CD4-positive, alpha-beta T cell (primary cell): ENCODE measurements at regions of chr12 and their contacts with region 1.

Region 1: DNA sequence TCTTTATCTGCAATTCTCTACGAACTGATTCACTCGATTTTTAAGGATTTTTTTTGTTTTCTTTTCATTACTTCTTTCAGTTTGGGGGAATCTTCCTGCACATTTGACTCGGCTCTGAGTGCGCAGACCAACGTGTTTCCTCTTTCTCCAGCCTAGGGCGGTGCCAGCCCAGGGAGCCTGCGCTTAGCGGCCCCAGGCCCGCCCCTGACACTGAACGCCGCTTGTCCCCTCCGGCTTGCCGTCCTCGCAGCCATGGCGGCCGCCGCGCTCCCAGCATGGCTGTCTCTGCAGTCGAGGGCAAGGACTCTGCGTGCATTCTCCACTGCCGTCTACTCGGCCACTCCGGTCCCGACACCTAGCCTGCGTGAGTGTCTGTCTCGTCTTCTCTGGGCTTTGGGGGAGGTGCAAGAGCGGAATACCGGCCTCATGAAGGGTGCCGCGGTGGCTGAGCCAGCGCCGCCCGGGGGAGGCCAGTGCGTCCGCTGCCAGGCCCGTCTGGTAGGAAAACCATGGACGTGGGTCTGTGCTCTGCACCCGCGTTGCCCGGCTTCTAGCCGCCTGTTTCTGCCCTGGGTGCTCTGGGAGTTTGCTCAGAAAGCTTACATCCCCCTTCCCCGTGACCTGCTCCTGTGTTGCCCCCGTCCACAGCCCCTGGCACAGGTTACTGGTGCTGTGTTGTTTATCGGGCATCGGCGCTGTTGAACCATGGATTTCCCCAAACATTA is at the start of gene MRPS35:
- DNase-seq: peak; percentile 83 to 95 (median 88)
- ATAC-seq: peak; percentile 96
- H3K4me3 ChIP-seq: peak within 1 kb of the TSS; percentile 71
- H3K4me3 Mint-ChIP-seq: peak within 1 kb of the TSS; percentile 98
- H3K27ac ChIP-seq: peak within 1 kb of the TSS; percentile 60 to 69
- H3K27ac Mint-ChIP-seq: peak within 1 kb of the TSS; percentile 96
- H3K4me1 ChIP-seq: peaks cover 25% of the 10 kb centered on the region
- H3K4me1 Mint-ChIP-seq: peaks cover 41% of the 10 kb centered on the region
- H3K27me3 ChIP-seq: no peaks in the 10 kb centered on the region
- H3K27me3 Mint-ChIP-seq: no peaks in the 10 kb centered on the region
- CTCF ChIP-seq: no peak
- total RNA-seq, gene MRPS35: 22.1 to 23.9 TPM

Region 2: DNA sequence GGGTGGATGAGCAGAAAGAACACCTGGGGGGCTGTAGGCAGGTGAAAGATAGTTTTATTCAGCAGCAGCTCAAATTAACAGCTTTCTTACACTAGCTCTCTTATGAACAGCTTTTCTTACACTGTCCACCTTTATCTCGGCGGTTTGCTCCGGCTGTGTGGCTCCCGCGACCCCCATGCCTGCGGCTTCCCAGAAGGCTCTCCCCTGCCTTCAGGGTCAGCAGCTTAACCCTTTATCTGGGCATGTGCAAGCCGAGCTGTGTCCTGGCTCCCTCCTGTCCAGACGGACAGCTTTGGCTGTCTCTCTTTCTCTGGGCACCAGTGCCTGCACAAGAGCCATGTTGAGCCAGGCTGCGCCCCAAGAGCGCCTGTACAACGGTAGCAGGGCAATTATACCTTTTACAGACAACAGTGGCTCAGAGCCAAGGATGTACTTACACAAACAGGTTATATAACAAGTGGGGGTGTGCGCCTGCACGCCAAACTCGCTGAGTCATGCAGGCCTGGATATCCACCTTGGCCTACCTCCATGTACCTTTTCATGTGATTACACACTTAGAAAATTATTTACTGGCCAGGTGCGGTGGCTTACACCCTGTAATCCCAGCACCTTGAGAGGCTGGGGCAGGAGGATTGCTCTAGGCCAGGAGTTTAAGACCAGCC is 40.8 kb after region 1 on chr12:
- CTCF ChIA-PET with region 1: no interaction called
- POLR2A ChIA-PET with region 1: no interaction called
- intact Hi-C with region 1: no loop called
- DNase-seq: no peak
- ATAC-seq: no peak
- H3K4me3 ChIP-seq: no peak overlapping the region
- H3K4me3 Mint-ChIP-seq: no peak overlapping the region
- H3K27ac ChIP-seq: no peak overlapping the region
- H3K27ac Mint-ChIP-seq: no peak overlapping the region
- H3K4me1 ChIP-seq: no peaks in the 10 kb centered on the region
- H3K4me1 Mint-ChIP-seq: no peaks in the 10 kb centered on the region
- H3K27me3 ChIP-seq: no peaks in the 10 kb centered on the region
- H3K27me3 Mint-ChIP-seq: no peaks in the 10 kb centered on the region
- CTCF ChIP-seq: no peak

Region 3: GRCh38 chr12:27779920-27780611 is 69.3 kb after region 1 on chr12 and contains the starts of genes KLHL42 and MANSC4:
- CTCF ChIA-PET with region 1: no interaction called
- POLR2A ChIA-PET with region 1: interaction called, 17 read pairs
- intact Hi-C with region 1: loop called in 1 of 2 experiments (anchors 5 kb)
- DNase-seq: peak; percentile 47 to 84 (median 65)
- ATAC-seq: peak; percentile 81
- H3K4me3 ChIP-seq: peak within 1 kb of the TSS; percentile 80
- H3K4me3 Mint-ChIP-seq: peak within 1 kb of the TSS; percentile 90
- H3K27ac ChIP-seq: peak within 1 kb of the TSS in 1 of 2 donors; percentile 22
- H3K27ac Mint-ChIP-seq: peak within 1 kb of the TSS; percentile 80
- H3K4me1 ChIP-seq: peaks cover 27% of the 10 kb centered on the region
- H3K4me1 Mint-ChIP-seq: peaks cover 40% of the 10 kb centered on the region
- H3K27me3 ChIP-seq: no peaks in the 10 kb centered on the region
- H3K27me3 Mint-ChIP-seq: no peaks in the 10 kb centered on the region
- CTCF ChIP-seq: no peak
- total RNA-seq, gene KLHL42: 12.8 to 13.2 TPM
- total RNA-seq, gene MANSC4: not detected